ENCODE measurements at regions of chr4 and their contacts with region 1.

Region 1: DNA sequence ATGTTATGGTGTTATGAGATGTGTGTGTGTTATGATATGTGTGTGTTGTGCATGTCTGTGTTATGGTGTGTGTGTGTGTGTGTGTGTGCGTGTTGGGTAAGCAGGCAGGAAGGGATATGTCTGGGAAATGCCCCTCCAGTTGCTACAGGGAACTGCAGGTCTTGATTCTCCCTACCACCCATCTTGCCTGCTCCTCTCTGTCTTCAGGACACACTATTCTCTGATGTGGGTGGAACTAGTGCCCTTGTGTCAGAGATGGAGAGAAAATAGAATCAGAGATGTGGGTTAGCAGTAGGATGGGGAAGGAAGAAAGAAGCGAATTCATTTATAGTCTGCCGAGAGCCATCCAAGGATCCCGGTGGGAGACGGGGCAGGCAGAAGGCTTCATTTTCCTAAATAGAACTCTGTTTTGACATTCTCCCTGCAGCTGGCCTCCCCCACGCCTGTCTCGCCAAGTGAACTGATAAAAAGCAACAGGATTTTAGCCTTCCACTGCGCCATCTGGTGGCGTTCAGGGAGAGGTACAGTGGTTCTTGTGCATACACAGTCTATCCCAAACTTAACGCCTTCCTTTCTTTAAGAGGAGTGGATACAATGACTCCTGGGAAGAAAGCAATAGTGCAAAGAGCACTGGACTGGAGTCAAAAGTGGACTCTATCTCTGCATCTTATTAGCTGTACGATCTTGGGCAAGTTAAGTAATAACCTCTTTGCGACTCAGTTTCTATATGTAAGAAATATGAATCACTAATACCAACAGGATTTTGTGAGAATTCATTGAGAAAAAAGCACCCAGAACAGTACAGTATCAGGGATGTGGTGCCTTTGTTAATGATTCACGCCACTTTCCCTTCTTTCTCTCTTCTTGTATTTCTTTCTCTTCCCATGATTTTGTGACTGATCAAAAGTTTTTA is 14.1 kb upstream of the MGST2 start:
- DNase-seq: peak; percentile 81
- H3K4me3 Mint-ChIP-seq: no peak overlapping the region
- H3K27ac Mint-ChIP-seq: no peak overlapping the region
- H3K4me1 Mint-ChIP-seq: peaks cover 3% of the 10 kb centered on the region
- H3K27me3 Mint-ChIP-seq: peaks cover 2% of the 10 kb centered on the region

Region 2: DNA sequence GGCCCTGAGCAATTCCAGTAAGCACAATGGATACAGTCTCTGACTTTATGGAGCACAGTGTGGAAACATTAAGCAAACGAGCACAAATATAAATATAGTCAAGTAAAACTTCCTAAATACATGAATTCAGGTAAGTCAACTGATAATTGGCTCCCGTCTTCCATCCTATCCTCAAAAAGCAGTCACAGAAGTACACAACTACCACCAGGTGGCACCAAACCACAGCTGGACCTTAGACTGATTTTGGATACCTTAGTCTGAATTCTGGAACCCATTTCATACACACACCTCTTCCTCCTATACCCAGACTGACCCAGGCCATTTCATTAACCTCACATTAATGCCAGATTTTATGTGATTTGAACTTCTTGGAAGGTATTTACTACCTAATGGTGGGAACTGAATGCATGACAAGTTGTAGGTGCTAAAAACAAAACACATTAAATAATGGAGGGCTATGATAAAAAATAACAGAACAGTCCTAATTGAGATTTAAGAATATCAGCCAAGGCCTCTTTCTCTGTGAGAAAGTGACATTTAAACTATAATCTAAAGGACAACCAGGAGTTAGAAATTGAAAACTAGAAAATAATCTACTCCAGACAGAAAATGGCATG is 552.1 kb before region 1 on chr4:
- CTCF ChIA-PET with region 1: no interaction called
- intact Hi-C with region 1: loop called (anchors 1 kb)
- DNase-seq: peak; percentile 89
- H3K4me3 Mint-ChIP-seq: no peak overlapping the region
- H3K27ac Mint-ChIP-seq: no peak overlapping the region
- H3K4me1 Mint-ChIP-seq: no peaks in the 10 kb centered on the region
- H3K27me3 Mint-ChIP-seq: no peaks in the 10 kb centered on the region

Region 3: GRCh38 chr4:139229534-139230039 is 422.0 kb before region 1 on chr4:
- CTCF ChIA-PET with region 1: no interaction called
- intact Hi-C with region 1: loop called (anchors 1 kb)
- DNase-seq: no peak
- H3K4me3 Mint-ChIP-seq: no peak overlapping the region
- H3K27ac Mint-ChIP-seq: no peak overlapping the region
- H3K4me1 Mint-ChIP-seq: no peaks in the 10 kb centered on the region
- H3K27me3 Mint-ChIP-seq: no peaks in the 10 kb centered on the region

Region 4: DNA sequence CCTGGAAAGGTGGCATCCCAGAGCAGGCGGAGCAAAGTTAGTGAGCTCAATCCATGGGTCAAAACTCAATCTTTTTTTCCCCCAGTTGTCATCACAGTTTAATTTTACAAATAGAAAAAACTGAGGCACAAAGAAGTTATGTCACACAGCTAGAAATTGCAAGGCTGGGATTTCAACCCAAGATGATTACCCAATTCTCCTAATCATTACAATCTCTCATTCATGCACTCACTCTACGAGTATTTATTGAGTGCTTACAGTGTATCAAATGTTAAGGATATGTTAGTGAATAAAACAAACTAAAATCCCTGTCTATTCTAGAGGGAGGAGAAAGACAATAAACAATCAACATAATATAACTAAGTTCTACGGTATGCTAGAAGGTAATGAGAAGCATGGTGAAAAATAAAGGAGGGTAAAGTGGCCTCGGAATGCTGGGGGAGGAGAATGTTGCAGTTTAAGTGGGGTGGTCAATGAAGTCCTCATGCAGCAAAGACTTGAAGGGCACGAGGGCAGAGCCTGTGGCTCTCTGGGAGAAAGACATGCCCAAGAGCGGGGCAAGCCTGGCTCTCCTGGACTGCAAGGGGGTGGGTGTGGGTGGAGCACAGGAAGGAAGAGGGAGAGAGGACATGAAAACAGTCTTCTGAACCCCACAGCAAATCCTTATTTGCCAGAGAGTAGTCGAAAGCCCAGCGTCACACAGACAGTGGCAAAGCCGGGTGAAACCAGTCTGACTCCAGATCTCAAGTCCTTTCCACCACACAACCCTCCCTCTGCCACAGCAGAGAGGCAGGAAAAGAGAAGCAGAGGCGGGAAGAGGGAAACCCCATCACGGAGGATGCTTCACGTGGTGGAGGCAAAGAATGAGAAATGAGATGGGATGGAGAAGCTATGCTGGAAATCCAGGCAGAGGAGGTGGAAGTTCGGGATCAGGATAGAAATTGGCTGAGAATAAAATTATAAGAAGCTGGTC is 149.3 kb before region 1 on chr4:
- CTCF ChIA-PET with region 1: interaction called, 6 read pairs
- intact Hi-C with region 1: loop called (anchors 1 kb)
- DNase-seq: no peak
- H3K4me3 Mint-ChIP-seq: no peak overlapping the region
- H3K27ac Mint-ChIP-seq: no peak overlapping the region
- H3K4me1 Mint-ChIP-seq: no peaks in the 10 kb centered on the region
- H3K27me3 Mint-ChIP-seq: peaks cover 2% of the 10 kb centered on the region

Region 5: DNA sequence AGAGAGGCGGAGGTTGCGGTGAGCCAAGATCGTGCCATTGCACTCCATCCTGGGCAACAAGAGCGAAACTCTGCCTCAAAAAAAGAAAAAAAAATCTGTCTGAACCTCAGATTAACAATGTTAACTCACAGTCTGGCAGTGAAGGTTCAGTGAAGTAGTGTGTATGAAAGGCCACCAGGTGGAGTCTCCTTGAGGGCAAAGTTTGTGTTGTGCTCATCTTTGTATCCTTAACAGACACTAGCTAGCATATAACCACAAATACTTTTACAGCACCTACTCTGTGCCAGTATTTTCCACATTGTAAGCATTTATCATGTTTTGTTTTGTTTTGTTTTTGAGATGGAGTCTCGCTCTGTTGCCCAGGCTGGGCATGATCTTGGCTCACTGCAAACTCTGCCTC is 31.9 kb before region 1 on chr4:
- CTCF ChIA-PET with region 1: interaction called, 7 read pairs
- intact Hi-C with region 1: loop called (anchors 1 kb)
- DNase-seq: peak; percentile 16
- H3K4me3 Mint-ChIP-seq: no peak overlapping the region
- H3K27ac Mint-ChIP-seq: no peak overlapping the region
- H3K4me1 Mint-ChIP-seq: no peaks in the 10 kb centered on the region
- H3K27me3 Mint-ChIP-seq: no peaks in the 10 kb centered on the region

Region 6: GRCh38 chr4:140103676-140104075 is 452.1 kb after region 1 on chr4:
- CTCF ChIA-PET with region 1: no interaction called
- intact Hi-C with region 1: no loop called
- DNase-seq: peak; percentile 64
- H3K4me3 Mint-ChIP-seq: no peak overlapping the region
- H3K27ac Mint-ChIP-seq: no peak overlapping the region
- H3K4me1 Mint-ChIP-seq: peaks cover 48% of the 10 kb centered on the region
- H3K27me3 Mint-ChIP-seq: peaks cover 2% of the 10 kb centered on the region